ENCODE measurements at regions of chr10 and their contacts with region 1.

Region 1: DNA sequence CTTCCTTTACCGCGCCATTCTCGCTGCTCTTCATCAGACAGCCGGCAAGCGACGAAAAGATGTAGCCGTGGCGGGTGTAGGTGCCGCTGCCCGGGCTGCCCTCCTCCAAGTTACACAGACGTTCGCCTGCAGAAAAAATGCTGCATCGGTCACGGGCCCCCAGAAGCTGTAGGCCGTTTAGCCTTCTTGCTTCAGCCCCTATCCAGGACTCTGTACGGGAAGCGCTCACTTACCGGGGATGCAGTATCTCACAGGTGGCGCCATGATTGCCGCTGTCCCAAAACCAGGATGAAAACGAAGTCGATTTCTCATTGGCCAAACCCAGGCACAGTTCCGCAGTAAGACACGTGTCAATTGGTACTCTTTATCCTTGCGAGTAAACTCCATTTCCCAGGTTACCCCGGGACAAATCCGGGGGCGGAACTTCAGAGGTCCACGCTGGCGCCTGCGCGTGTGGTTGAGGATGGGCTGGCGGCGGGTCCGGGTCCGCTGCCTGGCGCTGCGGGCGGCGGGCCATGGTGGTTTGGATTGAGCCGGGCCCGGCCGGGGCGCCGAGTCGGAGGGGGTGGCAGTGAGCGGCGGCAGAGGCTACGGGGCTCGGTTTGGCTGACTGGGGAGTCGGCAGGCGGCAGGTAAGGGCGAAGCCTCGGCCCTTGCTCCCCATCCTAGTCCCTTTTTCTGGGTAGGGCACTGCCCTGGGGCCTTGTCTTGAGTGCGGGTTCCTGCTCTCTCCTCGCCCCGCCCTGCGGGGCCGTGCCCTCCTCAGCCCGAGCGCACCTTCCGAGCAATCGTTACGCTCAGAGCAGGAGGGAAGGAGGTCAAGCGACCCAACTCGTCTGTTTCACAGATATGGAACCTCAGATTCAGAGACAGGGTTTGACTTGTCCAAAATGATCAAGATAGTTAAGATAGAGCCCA is at the starts of genes EXOSC1 and ZDHHC16:
- DNase-seq: peak; percentile 73 to 95 (median 86)
- ATAC-seq: peak; percentile 97
- H3K4me3 ChIP-seq: peak within 1 kb of the TSS; percentile 78
- H3K4me3 Mint-ChIP-seq: peak within 1 kb of the TSS; percentile 100
- H3K27ac ChIP-seq: peak within 1 kb of the TSS; percentile 57 to 73
- H3K27ac Mint-ChIP-seq: peak within 1 kb of the TSS; percentile 95
- H3K4me1 ChIP-seq: peaks cover 33% of the 10 kb centered on the region
- H3K4me1 Mint-ChIP-seq: peaks cover 53% of the 10 kb centered on the region
- H3K27me3 ChIP-seq: no peaks in the 10 kb centered on the region
- H3K27me3 Mint-ChIP-seq: no peaks in the 10 kb centered on the region
- CTCF ChIP-seq: no peak
- total RNA-seq, gene EXOSC1: 28.8 to 29.7 TPM
- total RNA-seq, gene ZDHHC16: 6.2 to 6.5 TPM

Region 2: DNA sequence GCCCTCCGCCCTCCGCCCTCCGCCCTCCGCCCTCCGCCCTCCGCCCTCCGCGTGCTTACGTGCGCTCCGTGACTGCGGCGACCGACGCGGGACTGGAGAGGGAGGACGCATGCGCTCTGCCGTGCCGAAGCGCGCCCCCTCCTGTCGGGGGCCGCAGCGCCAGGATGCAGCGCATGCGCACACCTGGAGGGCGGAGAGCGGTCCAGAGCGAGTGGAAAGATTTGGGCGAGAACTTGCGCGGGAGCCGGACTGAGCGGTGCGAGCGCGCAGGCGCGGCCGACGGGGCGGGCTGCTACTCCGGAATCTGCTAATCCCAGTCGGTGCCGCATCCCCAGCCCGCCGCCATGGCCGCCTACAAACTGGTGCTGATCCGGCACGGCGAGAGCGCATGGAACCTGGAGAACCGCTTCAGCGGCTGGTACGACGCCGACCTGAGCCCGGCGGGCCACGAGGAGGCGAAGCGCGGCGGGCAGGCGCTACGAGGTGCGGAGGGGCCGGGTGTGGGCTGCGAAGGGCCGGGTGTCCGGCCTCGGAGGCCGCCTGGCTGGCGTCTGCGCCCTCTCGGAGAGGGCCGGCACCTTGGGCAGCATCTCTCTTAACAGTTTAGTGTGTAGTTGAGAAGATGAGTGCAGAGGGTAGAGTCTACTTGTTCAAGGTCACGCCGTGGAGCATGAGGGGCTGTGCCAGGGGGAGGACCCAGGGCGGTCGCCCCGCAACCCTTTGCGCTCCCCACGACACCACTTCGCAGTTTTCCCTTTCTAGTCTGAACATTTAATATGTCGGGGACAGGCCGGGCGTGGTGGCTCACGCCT is 19.8 kb before region 1 on chr10 and contains the start of gene PGAM1:
- CTCF ChIA-PET with region 1: no interaction called
- POLR2A ChIA-PET with region 1: interaction called, 4 read pairs
- intact Hi-C with region 1: loop called (anchors 1 to 2 kb)
- DNase-seq: peak; percentile 90 to 99 (median 94)
- ATAC-seq: peak; percentile 82
- H3K4me3 ChIP-seq: peak within 1 kb of the TSS; percentile 78
- H3K4me3 Mint-ChIP-seq: peak within 1 kb of the TSS; percentile 95
- H3K27ac ChIP-seq: peak within 1 kb of the TSS; percentile 75 to 85
- H3K27ac Mint-ChIP-seq: peak within 1 kb of the TSS; percentile 89
- H3K4me1 ChIP-seq: peaks cover 43% of the 10 kb centered on the region
- H3K4me1 Mint-ChIP-seq: peaks cover 46% of the 10 kb centered on the region
- H3K27me3 ChIP-seq: no peaks in the 10 kb centered on the region
- H3K27me3 Mint-ChIP-seq: no peaks in the 10 kb centered on the region
- CTCF ChIP-seq: peak; percentile 64
- total RNA-seq, gene PGAM1: 50.7 to 55.5 TPM

Region 3: DNA sequence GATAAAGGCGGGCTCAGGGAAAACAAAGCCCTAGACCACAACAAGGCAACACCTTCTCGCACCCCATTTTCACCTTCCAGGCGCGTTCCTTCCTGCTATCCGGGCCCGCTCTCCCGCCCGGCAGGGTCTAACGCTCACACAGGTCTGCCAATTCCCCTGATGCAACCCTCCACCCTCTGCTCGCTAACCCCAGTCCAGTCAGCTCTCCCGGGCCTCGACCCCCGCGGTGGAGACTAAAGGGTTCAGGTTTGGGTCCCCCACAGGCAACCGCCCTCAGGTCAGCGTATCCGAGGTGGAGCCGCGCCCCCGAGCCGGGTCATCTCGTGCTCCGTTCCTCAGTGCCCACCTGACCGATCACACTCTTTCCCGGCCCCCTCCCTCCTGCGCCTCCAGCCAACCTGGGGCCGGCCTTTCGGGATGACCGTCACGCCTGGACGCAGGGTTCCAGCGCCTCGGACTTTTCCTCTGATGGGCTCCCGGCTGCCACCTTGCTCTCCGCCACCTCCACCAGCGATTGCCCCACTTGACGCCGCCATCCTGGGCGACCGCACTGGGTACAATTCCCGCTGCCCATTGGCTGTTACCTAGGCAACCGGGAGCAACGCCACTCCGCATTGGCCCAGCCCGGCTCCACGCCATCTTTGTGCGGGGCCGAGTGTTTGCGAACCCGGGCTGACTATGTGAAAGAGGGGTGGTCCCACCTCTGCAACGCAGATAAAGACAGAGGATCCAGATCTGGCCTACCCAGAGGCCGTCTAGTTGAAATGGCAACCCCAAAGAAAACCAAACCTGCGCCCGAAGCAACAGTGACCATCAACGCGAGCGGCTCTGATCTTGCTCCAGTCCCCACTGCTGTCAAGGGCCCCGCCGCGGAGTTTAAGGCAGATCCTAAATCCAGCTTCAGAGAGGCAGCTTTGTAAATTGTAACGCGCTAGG is 187.2 kb after region 1 on chr10 and contains the start of gene MORN4:
- CTCF ChIA-PET with region 1: no interaction called
- POLR2A ChIA-PET with region 1: no interaction called
- intact Hi-C with region 1: loop called in 1 of 2 experiments (anchors 5 kb)
- DNase-seq: peak; percentile 85 to 95 (median 89)
- ATAC-seq: peak; percentile 99
- H3K4me3 ChIP-seq: peak within 1 kb of the TSS; percentile 98
- H3K4me3 Mint-ChIP-seq: peak within 1 kb of the TSS; percentile 94
- H3K27ac ChIP-seq: no peak within 1 kb of the TSS
- H3K27ac Mint-ChIP-seq: peak within 1 kb of the TSS; percentile 71
- H3K4me1 ChIP-seq: peaks cover 18% of the 10 kb centered on the region
- H3K4me1 Mint-ChIP-seq: peaks cover 16% of the 10 kb centered on the region
- H3K27me3 ChIP-seq: no peaks in the 10 kb centered on the region
- H3K27me3 Mint-ChIP-seq: no peaks in the 10 kb centered on the region
- CTCF ChIP-seq: no peak
- total RNA-seq, gene MORN4: 0.36 to 0.39 TPM

Region 4: GRCh38 chr10:97673736-97674525 is 227.9 kb after region 1 on chr10:
- CTCF ChIA-PET with region 1: no interaction called
- POLR2A ChIA-PET with region 1: no interaction called
- intact Hi-C with region 1: no loop called
- DNase-seq: no peak
- ATAC-seq: no peak
- H3K4me3 ChIP-seq: no peak overlapping the region
- H3K4me3 Mint-ChIP-seq: no peak overlapping the region
- H3K27ac ChIP-seq: no peak overlapping the region
- H3K27ac Mint-ChIP-seq: no peak overlapping the region
- H3K4me1 ChIP-seq: peaks cover 5% of the 10 kb centered on the region
- H3K4me1 Mint-ChIP-seq: no peaks in the 10 kb centered on the region
- H3K27me3 ChIP-seq: no peaks in the 10 kb centered on the region
- H3K27me3 Mint-ChIP-seq: no peaks in the 10 kb centered on the region
- CTCF ChIP-seq: no peak

Region 5: DNA sequence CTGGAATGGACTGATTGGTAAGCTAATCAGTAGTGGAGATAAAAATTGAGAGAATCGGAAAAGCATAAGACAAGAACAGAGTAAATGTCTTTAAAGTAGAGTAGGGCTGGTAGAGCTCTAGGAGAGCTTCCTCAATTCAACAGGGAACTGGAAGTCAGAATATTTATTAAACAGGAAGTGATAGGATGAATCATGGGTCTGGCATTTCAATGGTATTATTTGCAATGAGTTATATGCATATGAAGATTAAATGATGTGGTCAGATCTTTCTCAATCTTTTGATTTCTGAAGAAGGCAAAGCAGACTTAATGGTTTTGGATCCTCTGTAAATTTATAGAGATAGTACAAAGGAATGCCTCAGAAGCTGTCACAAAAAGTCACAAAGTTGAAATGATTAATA is 1440.7 kb after region 1 on chr10:
- CTCF ChIA-PET with region 1: no interaction called
- POLR2A ChIA-PET with region 1: no interaction called
- intact Hi-C with region 1: no loop called
- DNase-seq: peak in 3 of 14 experiments; percentile 3 to 17 (median 12)
- ATAC-seq: no peak
- H3K4me3 ChIP-seq: no peak overlapping the region
- H3K4me3 Mint-ChIP-seq: no peak overlapping the region
- H3K27ac ChIP-seq: no peak overlapping the region
- H3K27ac Mint-ChIP-seq: no peak overlapping the region
- H3K4me1 ChIP-seq: no peaks in the 10 kb centered on the region
- H3K4me1 Mint-ChIP-seq: no peaks in the 10 kb centered on the region
- H3K27me3 ChIP-seq: peaks cover 0 to 4% of the 10 kb centered on the region in 2 experiments
- H3K27me3 Mint-ChIP-seq: no peaks in the 10 kb centered on the region
- CTCF ChIP-seq: no peak